A549 (cell line): ENCODE measurements at regions of chr17 and their contacts with region 1.

Region 1: GRCh38 chr17:50560185-50560824 is at the start of gene CACNA1G:
- DNase-seq: peak; percentile 93 to 99
- ATAC-seq: peak; percentile 77 to 90
- H3K4me3 ChIP-seq: peak within 1 kb of the TSS; percentile 69
- H3K27ac ChIP-seq: peak within 1 kb of the TSS; percentile 75 to 88
- H3K4me1 ChIP-seq: peaks cover 37% of the 10 kb centered on the region
- CTCF ChIP-seq: no peak
- EP300 ChIP-seq: no peak
- POLR2A ChIP-seq: peak; percentile 49
- RAD21 ChIP-seq: no peak
- polyA plus RNA-seq, gene CACNA1G: 4.0 and 4.9 TPM in 2 replicates

Region 2: GRCh38 chr17:50575581-50576210 is 15.4 kb after region 1 on chr17:
- CTCF ChIA-PET with region 1: interaction called, 18 read pairs
- POLR2A ChIA-PET with region 1: no interaction called
- DNase-seq: no peak
- ATAC-seq: peak; percentile 36 to 62; a peak in 4 of 6 replicates
- H3K4me3 ChIP-seq: no peak overlapping the region
- H3K27ac ChIP-seq: no peak overlapping the region
- H3K4me1 ChIP-seq: no peaks in the 10 kb centered on the region
- CTCF ChIP-seq: no peak
- EP300 ChIP-seq: no peak
- POLR2A ChIP-seq: no peak
- RAD21 ChIP-seq: no peak

Region 3: DNA sequence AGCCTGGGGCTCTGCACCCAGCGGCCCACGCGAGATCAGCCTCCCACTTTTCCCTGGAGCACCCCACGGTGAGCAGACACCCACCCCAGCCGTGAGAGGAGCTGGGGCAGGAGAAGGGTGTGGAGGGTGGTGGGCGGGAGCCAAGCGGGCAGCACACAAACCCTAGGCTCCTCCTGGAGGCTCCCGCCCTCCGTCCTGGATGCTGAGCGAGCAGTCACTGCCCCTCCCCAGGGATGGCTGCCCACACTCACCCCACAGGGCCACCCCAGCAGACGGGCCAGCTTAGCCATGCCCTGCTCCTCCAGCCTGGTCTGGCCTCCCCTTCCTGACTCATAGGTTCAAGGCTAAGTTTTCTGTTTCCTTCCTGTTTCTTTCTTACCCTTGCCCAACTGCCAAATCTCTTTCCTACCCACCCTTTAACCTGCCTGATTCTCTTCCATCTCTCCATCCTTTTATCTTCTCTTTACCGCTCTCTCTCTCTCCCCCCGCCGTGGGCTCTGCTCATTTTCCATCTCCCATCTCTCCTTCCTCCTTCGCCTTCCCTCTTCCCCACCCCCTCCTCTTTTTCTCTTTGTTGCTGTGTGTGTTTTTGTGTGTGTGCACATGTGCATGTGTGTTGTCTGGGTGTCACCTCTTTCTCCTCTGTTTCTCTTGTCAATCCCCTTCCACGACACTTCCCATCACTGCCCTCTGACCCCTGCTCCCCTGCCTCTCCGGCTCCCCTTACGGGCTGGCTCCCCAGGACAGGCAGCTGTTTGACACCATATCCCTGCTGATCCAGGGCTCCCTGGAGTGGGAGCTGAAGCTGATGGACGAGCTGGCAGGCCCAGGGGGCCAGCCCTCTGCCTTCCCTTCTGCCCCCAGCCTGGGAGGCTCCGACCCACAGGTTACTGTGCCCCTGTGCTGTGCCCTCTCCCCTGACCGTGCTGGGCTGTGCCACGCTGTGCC is 58.9 kb after region 1 on chr17:
- CTCF ChIA-PET with region 1: interaction called, 99 read pairs
- POLR2A ChIA-PET with region 1: interaction called, 4 read pairs
- DNase-seq: no peak
- ATAC-seq: peak; percentile 12 to 31; a peak in 2 of 6 replicates
- H3K4me3 ChIP-seq: no peak overlapping the region
- H3K27ac ChIP-seq: peak overlapping the region; percentile 65 to 71; a peak in 5 of 6 replicates
- H3K4me1 ChIP-seq: peaks cover 30% of the 10 kb centered on the region
- CTCF ChIP-seq: no peak
- EP300 ChIP-seq: no peak
- POLR2A ChIP-seq: no peak
- RAD21 ChIP-seq: no peak

Region 4: DNA sequence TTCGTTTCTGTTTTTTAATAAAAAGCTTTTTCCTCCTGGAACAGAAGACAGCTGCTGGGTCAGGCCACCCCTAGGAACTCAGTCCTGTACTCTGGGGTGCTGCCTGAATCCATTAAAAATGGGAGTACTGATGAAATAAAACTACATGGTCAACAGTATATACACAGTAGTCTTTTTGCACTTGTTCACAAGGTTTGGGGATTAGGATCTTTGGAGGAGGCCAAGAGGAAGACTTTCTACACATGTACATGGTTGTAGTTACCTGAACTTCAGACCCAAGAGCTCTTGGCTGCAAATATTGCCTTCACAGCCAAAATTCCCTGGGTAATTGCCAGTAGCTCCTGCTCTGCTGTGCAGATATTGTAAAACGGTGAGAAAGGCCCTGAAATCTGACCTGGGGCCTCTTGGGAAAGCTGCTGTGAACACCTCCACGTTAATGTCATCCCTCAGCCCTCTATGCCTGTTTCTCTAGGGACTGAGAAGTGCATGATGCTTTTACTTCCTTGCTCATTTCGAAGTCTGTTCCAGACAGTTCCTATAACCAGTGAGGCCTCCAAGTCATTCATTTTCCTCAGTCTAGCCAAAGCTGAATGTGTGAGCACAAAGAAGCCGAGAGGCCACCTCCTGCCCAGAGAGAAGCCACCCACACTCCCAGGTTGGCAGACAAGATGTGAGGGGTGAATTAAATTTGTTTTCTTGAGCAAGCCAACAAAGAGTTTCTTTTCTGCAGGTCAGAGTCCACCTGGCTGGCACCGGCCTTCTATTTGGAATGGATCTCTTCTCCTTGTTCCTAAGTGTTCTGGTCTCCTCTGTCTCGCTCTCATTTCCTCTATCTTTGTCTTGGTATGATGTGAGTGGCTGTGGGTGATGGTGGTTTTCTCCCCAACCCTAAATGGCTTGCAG is 131.5 kb after region 1 on chr17:
- CTCF ChIA-PET with region 1: interaction called, 753 read pairs
- POLR2A ChIA-PET with region 1: interaction called, 11 read pairs
- DNase-seq: peak in 1 of 2 experiments; percentile 77
- ATAC-seq: peak in 1 of 2 experiments; percentile 2; a peak in 3 of 6 replicates
- H3K4me3 ChIP-seq: 0 out of 3 replicates have a peak overlapping the region, but pooled peaks have one; percentile 1
- H3K27ac ChIP-seq: peak overlapping the region; percentile 97 to 98
- H3K4me1 ChIP-seq: peaks cover 98% of the 10 kb centered on the region
- CTCF ChIP-seq: no peak
- EP300 ChIP-seq: no peak
- POLR2A ChIP-seq: no peak
- RAD21 ChIP-seq: no peak; a peak in 1 of 5 replicates

Region 5: DNA sequence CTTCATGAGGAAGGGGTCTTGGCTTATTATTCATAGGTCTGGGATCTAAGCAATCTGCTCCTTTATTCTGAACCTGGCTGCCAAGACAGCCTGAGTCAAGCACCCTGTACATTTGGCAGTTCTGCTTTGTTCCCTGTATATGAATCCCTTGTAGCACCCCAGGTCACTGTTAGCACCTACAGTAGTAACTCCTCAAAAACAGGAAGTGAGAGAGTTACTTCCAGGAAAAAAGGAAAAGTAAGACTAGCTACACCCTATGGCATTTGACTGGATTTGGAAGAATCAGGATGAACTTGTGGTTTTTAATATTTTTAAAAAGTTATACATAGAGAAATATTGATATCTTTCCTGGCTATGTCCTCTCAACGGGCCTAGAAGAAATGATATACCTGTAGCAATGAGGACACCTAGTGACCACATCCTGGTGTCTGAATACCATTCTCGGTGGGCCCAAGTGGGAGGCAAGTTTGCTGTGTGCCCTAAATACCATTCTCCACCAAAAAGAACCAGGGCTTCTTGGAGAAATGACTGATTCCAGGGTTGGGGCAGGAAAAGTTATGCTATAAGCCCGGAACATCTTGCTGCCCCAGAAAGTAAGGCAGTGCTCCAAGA is 137.5 kb after region 1 on chr17:
- CTCF ChIA-PET with region 1: interaction called, 753 read pairs
- POLR2A ChIA-PET with region 1: interaction called, 11 read pairs
- DNase-seq: peak in 1 of 2 experiments; percentile 61
- ATAC-seq: no peak
- H3K4me3 ChIP-seq: no peak overlapping the region
- H3K27ac ChIP-seq: peak overlapping the region; percentile 97 to 98
- H3K4me1 ChIP-seq: peaks cover 98% of the 10 kb centered on the region
- CTCF ChIP-seq: peak; percentile 64
- EP300 ChIP-seq: no peak
- POLR2A ChIP-seq: no peak
- RAD21 ChIP-seq: peak; percentile 79 to 80

Region 6: GRCh38 chr17:50719144-50719923 is 159.0 kb after region 1 on chr17 and contains the start of gene LUC7L3:
- CTCF ChIA-PET with region 1: no interaction called
- POLR2A ChIA-PET with region 1: interaction called, 12 read pairs
- DNase-seq: peak; percentile 95 to 98
- ATAC-seq: peak; percentile 92 to 95
- H3K4me3 ChIP-seq: peak within 1 kb of the TSS; percentile 66
- H3K27ac ChIP-seq: peak within 1 kb of the TSS; percentile 85 to 95
- H3K4me1 ChIP-seq: peaks cover 33% of the 10 kb centered on the region
- CTCF ChIP-seq: no peak
- EP300 ChIP-seq: no peak
- POLR2A ChIP-seq: peak; percentile 80
- RAD21 ChIP-seq: no peak
- polyA plus RNA-seq, gene LUC7L3: 117 and 209 TPM in 2 replicates